ENCODE measurements at regions of chr6 and their contacts with region 1.

Region 1: DNA sequence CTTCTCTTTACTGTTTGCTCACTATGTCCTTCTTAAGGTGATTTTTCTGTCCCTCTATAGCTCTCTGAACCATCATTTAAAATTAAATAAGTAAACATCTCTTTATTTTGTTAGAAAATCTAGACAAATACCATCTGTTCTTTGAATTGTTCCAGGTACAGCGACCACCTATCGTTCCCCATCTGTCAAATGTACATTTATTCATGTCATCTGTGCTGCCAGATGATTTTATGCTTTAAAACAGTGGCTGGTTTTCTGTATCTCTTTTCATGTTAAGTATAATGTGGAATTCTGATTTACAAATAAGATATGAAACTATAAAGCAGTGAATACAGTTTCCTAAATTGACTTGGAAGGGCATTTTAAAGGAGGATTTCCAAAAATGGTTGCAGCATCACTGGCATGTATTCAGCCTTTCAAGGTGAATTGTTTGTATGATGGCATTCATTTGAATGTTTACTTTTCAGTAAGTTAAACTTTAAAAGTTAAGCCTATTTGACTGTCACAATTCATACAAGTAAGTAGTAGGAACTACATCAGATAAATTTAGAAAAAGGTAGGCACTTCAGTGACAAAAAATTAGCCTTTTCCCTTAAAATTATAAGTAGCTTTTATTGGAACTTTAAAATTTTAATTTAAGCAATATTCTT is 92.6 kb upstream of the CLVS2 start:
- DNase-seq: no peak
- H3K4me3 ChIP-seq: no peak overlapping the region
- H3K27ac ChIP-seq: no peak overlapping the region
- H3K4me1 ChIP-seq: no peaks in the 10 kb centered on the region
- H3K27me3 ChIP-seq: no peaks in the 10 kb centered on the region
- CTCF ChIP-seq: no peak
- POLR2A ChIP-seq: no peak

Region 2: GRCh38 chr6:122116119-122116834 is 787.1 kb before region 1 on chr6:
- intact Hi-C with region 1: no loop called
- DNase-seq: no peak
- H3K4me3 ChIP-seq: no peak overlapping the region
- H3K27ac ChIP-seq: peak overlapping the region; percentile 27 to 33
- H3K4me1 ChIP-seq: peaks cover 0 to 5% of the 10 kb centered on the region in 2 donors
- H3K27me3 ChIP-seq: no peaks in the 10 kb centered on the region
- CTCF ChIP-seq: no peak
- POLR2A ChIP-seq: no peak

Region 3: DNA sequence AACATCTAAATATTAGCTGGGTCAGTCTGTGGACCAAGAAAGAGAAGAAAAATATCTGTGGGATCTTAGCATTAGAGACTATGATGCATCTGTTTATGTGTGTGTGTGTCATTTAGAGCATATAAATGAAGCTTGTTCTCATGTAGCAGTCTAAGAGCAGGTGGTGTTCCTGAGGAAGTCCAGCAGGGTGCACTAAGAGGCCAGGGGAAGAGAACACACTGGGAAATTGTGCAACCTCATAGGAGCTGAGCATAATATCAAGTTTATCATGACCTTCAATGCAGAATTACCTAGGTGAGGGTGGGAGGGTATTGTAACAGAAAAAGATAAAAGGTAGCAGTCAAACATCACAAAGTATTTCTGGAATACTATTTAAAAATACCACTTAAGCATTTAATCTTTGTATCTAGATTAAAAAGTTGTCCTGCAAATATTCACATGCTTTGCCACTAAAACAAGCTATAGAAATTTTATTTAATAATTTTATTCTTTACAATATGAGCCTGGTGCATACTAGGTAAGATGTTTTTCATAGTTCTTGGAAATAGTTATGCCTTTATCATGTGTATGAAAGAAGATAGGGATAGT is 33.9 kb before region 1 on chr6:
- intact Hi-C with region 1: no loop called
- DNase-seq: no peak
- H3K4me3 ChIP-seq: no peak overlapping the region
- H3K27ac ChIP-seq: no peak overlapping the region
- H3K4me1 ChIP-seq: no peaks in the 10 kb centered on the region
- H3K27me3 ChIP-seq: no peaks in the 10 kb centered on the region
- CTCF ChIP-seq: peak in 2 of 3 donors; percentile 29 to 50
- POLR2A ChIP-seq: no peak

Region 4: DNA sequence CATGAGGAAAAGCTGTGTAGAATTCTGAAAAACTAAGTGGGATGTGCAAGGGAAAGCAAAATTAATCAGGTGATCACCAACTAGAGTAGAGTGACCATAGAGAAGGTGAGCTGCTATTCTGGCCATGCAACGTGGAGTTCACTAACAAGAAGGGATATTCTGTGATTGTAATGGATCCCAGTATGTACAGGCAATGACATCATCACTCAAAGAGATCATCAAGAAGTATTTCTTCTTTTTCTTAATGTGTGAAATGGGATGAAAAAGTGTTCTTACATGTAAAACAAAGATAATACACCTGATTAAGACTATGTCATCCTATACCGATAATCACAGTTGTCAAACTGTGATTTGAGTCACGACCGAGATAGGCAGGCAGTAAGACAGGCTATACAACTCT is 13.1 kb before region 1 on chr6:
- intact Hi-C with region 1: loop called (anchors 1 kb)
- DNase-seq: no peak
- H3K4me3 ChIP-seq: no peak overlapping the region
- H3K27ac ChIP-seq: no peak overlapping the region
- H3K4me1 ChIP-seq: no peaks in the 10 kb centered on the region
- H3K27me3 ChIP-seq: no peaks in the 10 kb centered on the region
- CTCF ChIP-seq: no peak
- POLR2A ChIP-seq: no peak

Measured in breast epithelium (tissue), 4 donors.